ENCODE measurements at regions of chr15 and their contacts with region 1.

Region 1: GRCh38 chr15:63891079-63891767 is 57.5 kb upstream of the HERC1 start:
- DNase-seq: peak; percentile 81
- ATAC-seq: peak; percentile 96
- H3K4me3 ChIP-seq: no peak overlapping the region
- H3K27ac ChIP-seq: no peak overlapping the region
- H3K4me1 ChIP-seq: peaks cover under 1 to 19% of the 10 kb centered on the region in 2 experiments; a peak in 3 of 4 replicates
- H3K27me3 ChIP-seq: no peaks in the 10 kb centered on the region
- CTCF ChIP-seq: peak; percentile 87 to 95 (median 92)
- POLR2A ChIP-seq: no peak
- RAD21 ChIP-seq: peak; percentile 78

Region 2: DNA sequence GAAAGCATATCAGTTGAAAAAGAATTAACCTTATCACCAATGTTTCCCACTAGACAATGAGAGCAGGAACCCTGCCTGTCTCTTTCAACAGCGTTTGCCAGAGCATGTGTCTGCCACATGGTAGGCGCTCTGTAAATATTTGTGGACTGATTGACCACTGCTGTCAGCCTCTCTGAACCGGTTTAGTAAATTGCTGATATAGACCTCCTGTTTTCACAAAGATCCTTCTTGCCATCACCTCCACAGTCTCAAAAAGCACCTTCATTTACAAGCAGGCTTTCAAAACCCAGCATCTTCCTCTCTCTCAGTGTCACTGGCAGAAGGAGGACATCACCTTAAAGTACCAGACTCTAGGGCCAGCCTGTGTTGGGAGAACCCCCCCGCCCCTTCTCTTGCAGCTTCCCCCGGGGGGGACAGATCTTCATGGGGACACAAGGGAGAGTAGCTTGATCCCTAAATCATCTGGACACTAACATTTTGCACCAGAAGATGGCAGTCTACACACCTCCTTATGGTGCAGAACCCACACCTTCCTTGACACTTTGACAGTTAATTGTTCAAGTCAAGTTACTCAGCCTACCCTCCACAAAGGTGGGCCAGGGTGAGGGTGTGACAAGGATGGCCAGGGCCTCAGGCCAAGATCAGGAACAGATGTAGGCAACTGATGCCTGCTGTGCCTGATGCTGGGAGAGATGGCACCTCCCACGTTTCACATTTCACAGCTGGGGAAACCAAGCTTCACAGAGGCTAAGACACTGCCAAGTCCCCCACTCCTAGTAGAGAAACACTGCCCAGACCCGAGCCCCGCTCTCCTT is 424.6 kb before region 1 on chr15:
- CTCF ChIA-PET with region 1: no interaction called
- POLR2A ChIA-PET with region 1: no interaction called
- RAD21 ChIA-PET with region 1: no interaction called
- intact Hi-C with region 1: loop called (anchors 2 kb)
- DNase-seq: peak; percentile 74
- ATAC-seq: peak; percentile 94
- H3K4me3 ChIP-seq: no peak overlapping the region
- H3K27ac ChIP-seq: no peak overlapping the region
- H3K4me1 ChIP-seq: peaks cover 5 to 29% of the 10 kb centered on the region in 2 experiments
- H3K27me3 ChIP-seq: no peaks in the 10 kb centered on the region
- CTCF ChIP-seq: peak; percentile 52 to 75 (median 66); a peak in 5 of 6 replicates
- POLR2A ChIP-seq: no peak
- RAD21 ChIP-seq: peak; percentile 87

Region 3: GRCh38 chr15:63610200-63610841 is 280.9 kb before region 1 on chr15:
- CTCF ChIA-PET with region 1: no interaction called
- POLR2A ChIA-PET with region 1: no interaction called
- RAD21 ChIA-PET with region 1: no interaction called
- intact Hi-C with region 1: loop called (anchors 1 kb)
- DNase-seq: peak; percentile 69
- ATAC-seq: peak; percentile 98
- H3K4me3 ChIP-seq: no peak overlapping the region
- H3K27ac ChIP-seq: no peak overlapping the region
- H3K4me1 ChIP-seq: peaks cover 0 to 4% of the 10 kb centered on the region in 2 experiments; a peak in 1 of 4 replicates
- H3K27me3 ChIP-seq: no peaks in the 10 kb centered on the region
- CTCF ChIP-seq: peak; percentile 77 to 82 (median 80)
- POLR2A ChIP-seq: no peak
- RAD21 ChIP-seq: peak; percentile 90

Region 4: DNA sequence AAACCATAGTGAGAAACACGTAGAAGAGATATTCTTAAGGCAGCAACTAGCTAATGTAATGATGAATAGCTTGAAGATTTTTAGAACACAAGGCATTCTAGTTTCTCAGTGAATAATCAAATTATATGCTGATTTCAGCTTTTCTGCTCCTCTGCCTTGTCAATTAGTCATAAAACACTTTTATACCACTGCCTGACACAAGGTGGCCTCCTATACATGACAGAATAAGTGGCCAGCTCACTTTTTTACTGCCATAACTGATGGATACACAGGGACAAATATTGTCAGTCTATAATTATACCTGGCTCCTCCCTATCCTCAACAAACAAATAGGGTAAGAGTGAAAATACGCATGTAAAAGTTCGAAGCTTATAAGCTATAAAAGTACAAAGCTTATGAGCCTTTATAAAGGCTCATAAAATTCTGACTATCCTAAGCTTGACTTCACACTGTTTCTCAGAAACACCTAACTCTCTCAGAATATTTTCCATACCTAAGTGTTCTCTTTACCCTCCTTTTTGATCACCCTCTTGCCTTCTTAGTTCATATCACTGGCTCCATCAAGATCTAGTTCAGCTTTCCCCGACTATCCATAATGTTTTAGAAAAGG is 139.0 kb before region 1 on chr15:
- CTCF ChIA-PET with region 1: interaction called, 11 read pairs
- POLR2A ChIA-PET with region 1: no interaction called
- RAD21 ChIA-PET with region 1: no interaction called
- intact Hi-C with region 1: loop called (anchors 1 kb)
- DNase-seq: peak; percentile 60
- ATAC-seq: peak; percentile 93
- H3K4me3 ChIP-seq: no peak overlapping the region
- H3K27ac ChIP-seq: no peak overlapping the region
- H3K4me1 ChIP-seq: no peaks in the 10 kb centered on the region
- H3K27me3 ChIP-seq: no peaks in the 10 kb centered on the region
- CTCF ChIP-seq: peak; percentile 66 to 82 (median 72)
- POLR2A ChIP-seq: no peak
- RAD21 ChIP-seq: peak; percentile 87

Region 5: GRCh38 chr15:63826528-63826927 is 64.7 kb before region 1 on chr15:
- CTCF ChIA-PET with region 1: no interaction called
- POLR2A ChIA-PET with region 1: no interaction called
- RAD21 ChIA-PET with region 1: no interaction called
- intact Hi-C with region 1: loop called (anchors 1 kb)
- DNase-seq: no peak
- ATAC-seq: no peak
- H3K4me3 ChIP-seq: no peak overlapping the region
- H3K27ac ChIP-seq: no peak overlapping the region
- H3K4me1 ChIP-seq: no peaks in the 10 kb centered on the region
- H3K27me3 ChIP-seq: no peaks in the 10 kb centered on the region
- CTCF ChIP-seq: no peak
- POLR2A ChIP-seq: no peak
- RAD21 ChIP-seq: peak; percentile 18; the same call in 1 of the 2 replicates

Region 6: GRCh38 chr15:63870403-63871209 is 20.6 kb before region 1 on chr15:
- CTCF ChIA-PET with region 1: no interaction called
- POLR2A ChIA-PET with region 1: no interaction called
- RAD21 ChIA-PET with region 1: no interaction called
- intact Hi-C with region 1: no loop called
- DNase-seq: no peak
- ATAC-seq: peak; percentile 73
- H3K4me3 ChIP-seq: no peak overlapping the region
- H3K27ac ChIP-seq: no peak overlapping the region
- H3K4me1 ChIP-seq: peaks cover 15 to 36% of the 10 kb centered on the region in 2 experiments
- H3K27me3 ChIP-seq: 0 out of 2 replicates have a peak, but pooled peaks cover 3% of the 10 kb centered on the region
- CTCF ChIP-seq: no peak
- POLR2A ChIP-seq: no peak
- RAD21 ChIP-seq: no peak

Measured in HCT116 (cell line).